ENCODE measurements at regions of chr14 and their contacts with region 1.

Region 1: DNA sequence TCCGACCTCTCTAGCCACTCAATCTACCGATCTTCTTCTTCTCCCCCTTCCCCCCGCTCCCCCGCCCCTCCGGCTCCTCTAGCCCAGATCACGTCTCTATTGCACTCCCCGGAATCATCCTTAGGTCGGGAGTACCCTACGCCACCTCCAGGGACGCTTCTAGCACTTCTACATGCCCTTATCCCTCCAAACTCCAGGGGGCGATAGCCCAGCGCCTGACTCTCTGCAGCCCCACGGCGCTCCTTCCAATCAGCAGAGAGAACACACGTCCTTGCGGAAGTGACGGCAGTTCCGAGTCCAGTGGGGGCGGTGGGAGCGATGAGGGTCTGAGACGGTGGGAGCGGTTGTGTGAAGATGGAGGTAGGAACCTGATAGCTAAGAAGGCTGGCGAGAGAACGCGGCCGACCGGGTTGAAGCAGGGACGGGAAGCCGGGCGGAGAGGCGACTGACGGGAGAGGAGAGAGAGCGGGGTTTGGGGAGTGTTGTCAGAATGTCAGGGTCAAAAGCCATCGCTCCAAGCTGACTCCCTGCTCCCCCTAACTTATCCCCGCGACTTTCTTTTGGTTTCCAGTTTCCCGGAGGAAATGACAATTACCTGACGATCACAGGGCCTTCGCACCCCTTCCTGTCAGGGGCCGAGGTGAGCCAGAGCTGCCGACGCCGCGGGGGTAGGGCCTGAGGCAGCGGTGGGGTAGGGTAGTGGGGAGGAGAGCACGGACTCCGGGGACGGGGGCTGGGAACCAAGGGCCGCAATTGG is at the starts of genes RAB2B and TOX4:
- H3K4me3 ChIP-seq: peak within 1 kb of the TSS; percentile 97
- H3K27ac ChIP-seq: peak within 1 kb of the TSS; percentile 43
- H3K4me1 ChIP-seq: no peaks in the 10 kb centered on the region
- CTCF ChIP-seq: peak; percentile 98

Region 2: DNA sequence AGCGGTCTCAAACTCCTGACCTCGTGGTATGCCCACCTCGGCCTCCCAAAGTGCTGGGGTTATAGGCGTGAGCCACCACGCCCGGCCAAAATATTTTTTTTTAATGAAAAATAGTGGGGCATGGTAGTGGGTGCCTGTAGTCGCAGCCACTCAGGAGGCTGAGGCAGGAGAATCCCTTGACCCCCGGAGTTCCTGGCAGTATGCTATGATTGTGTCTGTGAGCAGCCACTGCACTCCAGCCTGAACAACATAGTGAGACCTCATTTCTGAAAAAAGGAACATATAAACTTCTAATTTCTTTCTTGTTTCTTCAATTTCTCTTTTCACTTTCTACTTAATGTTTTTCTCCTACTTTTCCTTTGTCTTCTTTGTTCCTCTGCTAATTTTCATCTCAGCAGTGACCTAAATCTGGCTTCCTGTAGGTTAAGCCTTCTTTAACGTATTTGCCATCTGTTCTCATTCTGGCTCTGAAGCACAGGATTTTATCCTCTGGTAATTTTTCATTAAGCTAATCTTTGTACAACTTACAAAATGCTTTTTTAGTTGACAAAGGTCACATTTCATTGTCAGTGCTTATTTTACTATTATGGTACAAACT is 201.7 kb before region 1 on chr14:
- CTCF ChIA-PET with region 1: no interaction called
- POLR2A ChIA-PET with region 1: no interaction called
- H3K4me3 ChIP-seq: no peak overlapping the region
- H3K27ac ChIP-seq: 0 out of 2 replicates have a peak overlapping the region, but pooled peaks have one; percentile 9
- H3K4me1 ChIP-seq: no peaks in the 10 kb centered on the region
- CTCF ChIP-seq: no peak

Region 3: DNA sequence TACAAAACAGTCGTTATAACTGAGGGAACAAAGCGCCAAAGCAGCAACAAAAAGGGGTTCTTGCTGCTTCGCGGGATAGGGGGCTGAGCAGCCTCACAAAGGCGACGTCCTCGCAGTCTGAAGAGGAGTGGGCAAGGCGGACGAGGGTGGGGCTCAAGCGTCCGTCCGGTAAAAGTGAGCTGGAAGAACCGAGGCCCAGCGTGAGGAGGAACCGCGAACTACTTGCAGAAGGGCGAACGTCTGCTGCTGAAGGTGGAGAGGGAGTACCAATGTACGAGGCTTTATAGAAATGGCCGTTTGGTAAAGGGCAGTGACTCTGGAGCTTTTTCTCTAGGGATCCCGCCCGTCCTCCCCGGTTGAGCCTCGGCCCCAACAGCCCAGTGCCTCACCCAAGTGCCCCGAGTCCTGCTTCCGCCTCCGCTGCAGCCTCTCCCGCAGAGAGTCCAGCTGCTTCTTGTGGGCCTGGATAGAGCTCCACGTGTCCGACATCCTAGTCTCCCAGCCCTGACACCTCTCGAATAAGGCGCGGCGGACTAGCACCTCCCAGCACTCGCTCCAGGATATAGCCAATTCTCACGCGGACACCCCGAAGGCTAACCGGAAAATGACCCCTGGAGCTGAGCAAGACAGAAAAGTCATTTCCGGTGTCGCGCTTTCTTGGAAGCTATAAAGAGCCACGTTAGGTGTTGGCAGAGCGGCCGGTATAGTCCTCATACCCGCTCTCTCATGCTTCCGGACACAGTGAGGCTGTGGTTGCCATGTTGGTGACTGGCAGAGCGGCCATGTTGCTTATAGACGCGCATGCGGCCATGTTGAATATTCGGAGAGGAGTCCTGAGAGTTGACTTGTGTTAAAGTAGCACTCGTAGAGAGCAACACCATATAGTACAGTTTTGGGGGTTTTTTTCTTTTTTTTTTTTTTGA is 33.9 kb after region 1 on chr14 and contains the start of gene METTL3:
- CTCF ChIA-PET with region 1: interaction called, 4 read pairs
- POLR2A ChIA-PET with region 1: interaction called, 10 read pairs
- H3K4me3 ChIP-seq: peak within 1 kb of the TSS; percentile 77
- H3K27ac ChIP-seq: peak within 1 kb of the TSS; percentile 72
- H3K4me1 ChIP-seq: 0 out of 2 replicates have a peak, but pooled peaks cover 4% of the 10 kb centered on the region
- CTCF ChIP-seq: peak; percentile 26; the same call in 1 of the 2 replicates